ENCODE measurements at regions of chr2 and their contacts with region 1.

Region 1: DNA sequence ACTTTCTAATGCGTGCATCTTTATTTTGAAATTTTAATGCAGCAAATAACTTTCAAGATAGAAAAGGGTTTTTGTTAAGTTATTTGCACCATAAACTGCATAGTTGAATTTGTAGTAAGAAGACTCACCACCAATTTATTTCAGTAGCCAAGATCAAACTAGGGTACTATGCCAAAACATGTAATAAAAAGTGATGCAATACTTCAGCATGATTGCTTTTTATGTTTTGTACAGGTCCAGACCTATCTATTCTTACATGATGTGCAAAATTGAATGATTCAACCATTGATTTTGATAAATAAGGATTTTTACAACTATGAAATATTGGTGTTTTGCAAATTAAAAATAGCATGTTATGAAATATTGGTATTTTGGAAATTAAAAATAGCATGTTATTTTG is 26.7 kb downstream of the AGPS start:
- DNase-seq: no peak
- ATAC-seq: no peak
- H3K4me3 Mint-ChIP-seq: no peak overlapping the region
- H3K27ac Mint-ChIP-seq: peak overlapping the region; percentile 80
- H3K4me1 Mint-ChIP-seq: peaks cover 34% of the 10 kb centered on the region
- H3K27me3 Mint-ChIP-seq: no peaks in the 10 kb centered on the region

Region 2: GRCh38 chr2:176978921-176979320 is 440.4 kb before region 1 on chr2:
- CTCF ChIA-PET with region 1: no interaction called
- POLR2A ChIA-PET with region 1: no interaction called
- intact Hi-C with region 1: no loop called
- DNase-seq: no peak
- ATAC-seq: no peak
- H3K4me3 Mint-ChIP-seq: no peak overlapping the region
- H3K27ac Mint-ChIP-seq: no peak overlapping the region
- H3K4me1 Mint-ChIP-seq: no peaks in the 10 kb centered on the region
- H3K27me3 Mint-ChIP-seq: no peaks in the 10 kb centered on the region

Region 3: GRCh38 chr2:177344316-177344715 is 75.0 kb before region 1 on chr2:
- CTCF ChIA-PET with region 1: interaction called, 153 read pairs
- POLR2A ChIA-PET with region 1: no interaction called
- intact Hi-C with region 1: no loop called
- DNase-seq: no peak
- ATAC-seq: no peak
- H3K4me3 Mint-ChIP-seq: no peak overlapping the region
- H3K27ac Mint-ChIP-seq: no peak overlapping the region
- H3K4me1 Mint-ChIP-seq: no peaks in the 10 kb centered on the region
- H3K27me3 Mint-ChIP-seq: no peaks in the 10 kb centered on the region

Region 4: GRCh38 chr2:177405029-177405692 is 14.1 kb before region 1 on chr2:
- CTCF ChIA-PET with region 1: interaction called, 10 read pairs
- POLR2A ChIA-PET with region 1: no interaction called
- intact Hi-C with region 1: no loop called
- DNase-seq: no peak
- ATAC-seq: no peak
- H3K4me3 Mint-ChIP-seq: no peak overlapping the region
- H3K27ac Mint-ChIP-seq: no peak overlapping the region
- H3K4me1 Mint-ChIP-seq: peaks cover 44% of the 10 kb centered on the region
- H3K27me3 Mint-ChIP-seq: no peaks in the 10 kb centered on the region

Region 5: GRCh38 chr2:177651833-177652232 is 232.6 kb after region 1 on chr2:
- CTCF ChIA-PET with region 1: no interaction called
- POLR2A ChIA-PET with region 1: no interaction called
- intact Hi-C with region 1: no loop called
- DNase-seq: no peak
- ATAC-seq: no peak
- H3K4me3 Mint-ChIP-seq: no peak overlapping the region
- H3K27ac Mint-ChIP-seq: no peak overlapping the region
- H3K4me1 Mint-ChIP-seq: no peaks in the 10 kb centered on the region
- H3K27me3 Mint-ChIP-seq: peaks cover 14% of the 10 kb centered on the region

Region 6: DNA sequence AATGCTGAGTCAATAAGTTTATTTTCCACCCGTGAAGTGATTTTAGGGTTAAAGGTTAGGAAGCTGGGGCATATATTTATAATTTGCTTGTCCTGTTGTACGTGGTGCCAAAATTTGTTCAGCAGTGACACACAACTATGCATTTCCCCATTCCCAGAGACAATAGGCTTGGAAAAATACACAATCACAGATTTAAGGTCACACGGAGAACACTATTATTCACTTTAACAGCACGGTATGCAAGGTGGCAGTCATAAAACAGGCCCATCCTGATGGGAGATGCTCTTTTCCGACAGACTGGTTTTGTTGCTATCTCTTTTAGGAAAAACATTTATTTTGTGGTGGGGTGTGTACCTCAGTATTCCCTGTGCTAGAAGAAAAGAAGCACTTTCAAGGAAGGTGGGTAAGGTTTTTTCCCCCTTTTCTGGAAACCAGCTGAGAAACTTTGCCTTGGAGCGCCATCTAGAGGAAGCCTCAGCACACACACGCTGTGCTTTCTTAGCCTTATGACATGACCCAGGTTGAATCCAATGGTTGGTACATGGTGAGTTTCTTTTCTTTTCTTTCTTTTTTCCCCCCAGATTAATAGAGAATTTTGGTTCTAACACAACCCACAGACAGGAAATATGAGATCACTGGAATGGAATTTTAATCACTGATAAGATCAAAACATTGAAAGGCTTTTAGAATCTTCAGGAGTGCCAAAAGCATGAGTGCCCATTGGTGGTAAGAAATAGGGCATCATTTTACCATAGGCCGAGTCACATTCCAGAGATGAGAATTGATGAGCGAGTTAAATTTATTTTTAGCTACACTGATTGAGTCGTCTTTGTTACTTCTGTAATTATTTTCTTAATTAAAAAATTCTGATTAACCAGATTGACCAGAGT is 305.4 kb after region 1 on chr2:
- CTCF ChIA-PET with region 1: interaction called, 6 read pairs
- POLR2A ChIA-PET with region 1: no interaction called
- intact Hi-C with region 1: loop called in 1 of 2 experiments (anchors 1 kb)
- DNase-seq: peak; percentile 72
- ATAC-seq: peak; percentile 64
- H3K4me3 Mint-ChIP-seq: no peak overlapping the region
- H3K27ac Mint-ChIP-seq: no peak overlapping the region
- H3K4me1 Mint-ChIP-seq: peaks cover 2% of the 10 kb centered on the region
- H3K27me3 Mint-ChIP-seq: peaks cover 16% of the 10 kb centered on the region

Measured in activated CD4-positive, alpha-beta T cell treated with anti-CD3 and anti-CD28 coated beads for 36 hours (primary cell).